ENCODE measurements at regions of chr6 and their contacts with region 1.

Region 1: DNA sequence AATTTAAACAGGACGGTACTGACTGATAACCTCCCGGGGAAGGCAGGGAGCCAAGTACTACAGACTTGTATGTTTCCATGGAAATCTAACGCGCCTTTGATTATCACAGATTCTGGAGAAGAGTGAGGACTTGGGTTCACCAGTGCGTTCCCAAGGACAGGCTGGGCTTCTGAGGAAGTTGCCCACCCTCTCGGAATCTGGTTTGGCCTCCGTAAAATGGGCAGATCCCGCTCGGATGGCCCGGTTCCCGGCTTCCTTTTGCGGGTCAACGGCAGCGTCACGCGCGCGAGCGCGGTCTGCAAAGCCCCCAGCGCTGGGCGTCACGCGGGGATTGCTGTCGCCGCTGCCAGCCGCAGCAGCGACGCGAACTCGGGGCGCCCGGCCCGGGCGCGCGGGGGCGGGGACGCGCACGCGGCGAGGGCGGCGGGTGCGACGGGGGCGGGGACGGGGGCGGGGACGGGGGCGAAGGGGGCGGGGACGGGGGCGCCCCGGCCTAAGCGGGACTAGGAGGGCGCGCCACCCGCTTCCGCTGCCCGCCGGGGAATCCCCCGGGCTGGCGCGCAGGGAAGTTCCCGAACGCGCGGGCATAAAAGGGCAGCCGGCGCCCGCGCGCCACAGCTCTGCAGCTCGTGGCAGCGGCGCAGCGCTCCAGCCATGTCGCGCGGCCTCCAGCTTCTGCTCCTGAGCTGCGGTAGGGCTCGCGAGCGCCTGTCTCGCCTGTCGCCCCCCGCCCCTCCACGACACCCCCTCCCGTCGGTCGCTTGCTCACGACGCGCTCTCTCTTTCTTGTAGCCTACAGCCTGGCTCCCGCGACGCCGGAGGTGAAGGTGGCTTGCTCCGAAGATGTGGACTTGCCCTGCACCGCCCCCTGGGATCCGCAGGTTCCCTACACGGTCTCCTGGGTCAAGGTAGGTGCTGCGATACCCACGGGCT is at the start of gene CD83:
- DNase-seq: peak; percentile 91
- ATAC-seq: peak; percentile 72
- H3K4me3 Mint-ChIP-seq: peak within 1 kb of the TSS; percentile 95
- H3K27ac Mint-ChIP-seq: peak within 1 kb of the TSS; percentile 94
- H3K4me1 Mint-ChIP-seq: peaks cover 47% of the 10 kb centered on the region
- H3K27me3 Mint-ChIP-seq: no peaks in the 10 kb centered on the region
- CTCF ChIP-seq: no peak
- total RNA-seq, gene CD83: 483 and 492 TPM in 2 replicates

Region 2: GRCh38 chr6:13814176-13814937 is 303.1 kb before region 1 on chr6 and contains the start of gene MCUR1:
- CTCF ChIA-PET with region 1: no interaction called
- POLR2A ChIA-PET with region 1: no interaction called
- intact Hi-C with region 1: loop called (anchors 1 kb)
- DNase-seq: peak; percentile 81
- ATAC-seq: peak; percentile 83
- H3K4me3 Mint-ChIP-seq: peak within 1 kb of the TSS; percentile 91
- H3K27ac Mint-ChIP-seq: peak within 1 kb of the TSS; percentile 87
- H3K4me1 Mint-ChIP-seq: peaks cover 32% of the 10 kb centered on the region
- H3K27me3 Mint-ChIP-seq: no peaks in the 10 kb centered on the region
- CTCF ChIP-seq: no peak
- total RNA-seq, gene MCUR1: 13.6 and 14.1 TPM in 2 replicates

Region 3: DNA sequence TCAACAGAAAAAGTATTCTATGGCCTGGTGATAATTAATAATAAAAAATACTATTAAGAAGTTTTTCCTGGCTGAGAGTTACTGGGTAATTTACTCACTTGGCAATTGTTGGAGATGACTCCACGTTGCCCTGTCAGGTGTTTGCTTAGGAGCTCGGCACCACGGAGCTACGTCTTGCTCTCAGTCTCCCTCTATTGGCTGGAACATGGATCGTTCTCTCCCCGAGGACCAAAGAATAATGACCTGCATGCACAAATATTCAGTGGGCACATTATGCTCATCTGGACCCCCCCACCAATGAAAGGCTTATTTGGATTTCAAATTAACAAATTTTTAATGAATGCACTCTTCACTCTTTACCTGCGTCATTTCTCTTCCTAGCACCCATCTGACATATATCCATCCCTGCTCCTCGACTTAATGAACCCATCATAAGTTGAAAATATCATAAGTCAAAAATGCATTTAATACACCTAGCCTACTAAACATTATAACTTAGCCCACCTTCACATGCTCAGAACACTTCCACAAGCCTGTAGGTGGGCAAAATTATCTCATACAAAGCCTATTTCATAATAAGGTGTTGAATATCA is 70.9 kb before region 1 on chr6:
- CTCF ChIA-PET with region 1: interaction called, 3 read pairs
- POLR2A ChIA-PET with region 1: interaction called, 12 read pairs
- intact Hi-C with region 1: loop called (anchors 1 kb)
- DNase-seq: no peak
- ATAC-seq: peak; percentile 89
- H3K4me3 Mint-ChIP-seq: no peak overlapping the region
- H3K27ac Mint-ChIP-seq: no peak overlapping the region
- H3K4me1 Mint-ChIP-seq: peaks cover 5% of the 10 kb centered on the region
- H3K27me3 Mint-ChIP-seq: peaks cover 3% of the 10 kb centered on the region
- CTCF ChIP-seq: peak; percentile 20

Region 4: GRCh38 chr6:14059791-14060444 is 57.5 kb before region 1 on chr6:
- CTCF ChIA-PET with region 1: no interaction called
- POLR2A ChIA-PET with region 1: no interaction called
- intact Hi-C with region 1: no loop called
- DNase-seq: no peak
- ATAC-seq: no peak
- H3K4me3 Mint-ChIP-seq: no peak overlapping the region
- H3K27ac Mint-ChIP-seq: no peak overlapping the region
- H3K4me1 Mint-ChIP-seq: no peaks in the 10 kb centered on the region
- H3K27me3 Mint-ChIP-seq: peaks cover 4% of the 10 kb centered on the region
- CTCF ChIP-seq: no peak

Region 5: DNA sequence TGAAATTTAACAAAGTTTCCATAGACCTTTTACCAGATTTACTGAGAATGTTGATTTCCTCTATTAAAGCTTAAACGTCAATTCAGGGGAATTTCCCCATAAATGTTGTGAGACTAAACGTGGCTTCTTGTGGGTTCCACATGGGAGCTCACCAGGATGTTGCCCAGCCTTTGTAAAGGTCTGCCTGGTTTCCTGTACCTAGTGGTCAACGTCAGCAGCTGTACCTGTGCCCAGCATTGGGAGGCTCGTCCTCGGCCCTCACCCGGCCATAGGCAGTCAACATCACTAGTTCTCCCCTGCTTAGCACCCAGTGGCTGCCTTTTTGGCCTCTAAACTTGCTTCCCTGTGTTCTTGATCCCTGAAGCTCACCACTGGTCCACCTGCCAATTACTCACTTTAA is 22.0 kb before region 1 on chr6:
- CTCF ChIA-PET with region 1: interaction called, 8 read pairs
- POLR2A ChIA-PET with region 1: interaction called, 911 read pairs
- intact Hi-C with region 1: loop called (anchors 1 kb)
- DNase-seq: peak; percentile 72
- ATAC-seq: peak; percentile 73
- H3K4me3 Mint-ChIP-seq: peak overlapping the region; percentile 85
- H3K27ac Mint-ChIP-seq: peak overlapping the region; percentile 100
- H3K4me1 Mint-ChIP-seq: peaks cover 96% of the 10 kb centered on the region
- H3K27me3 Mint-ChIP-seq: no peaks in the 10 kb centered on the region
- CTCF ChIP-seq: no peak

Region 6: GRCh38 chr6:14129575-14129974 is 12.2 kb after region 1 on chr6:
- CTCF ChIA-PET with region 1: interaction called, 6 read pairs
- POLR2A ChIA-PET with region 1: interaction called, 52 read pairs
- intact Hi-C with region 1: no loop called
- DNase-seq: no peak
- ATAC-seq: peak; percentile 19
- H3K4me3 Mint-ChIP-seq: peak overlapping the region; percentile 79
- H3K27ac Mint-ChIP-seq: peak overlapping the region; percentile 46
- H3K4me1 Mint-ChIP-seq: peaks cover 100% of the 10 kb centered on the region
- H3K27me3 Mint-ChIP-seq: no peaks in the 10 kb centered on the region
- CTCF ChIP-seq: no peak

Region 7: DNA sequence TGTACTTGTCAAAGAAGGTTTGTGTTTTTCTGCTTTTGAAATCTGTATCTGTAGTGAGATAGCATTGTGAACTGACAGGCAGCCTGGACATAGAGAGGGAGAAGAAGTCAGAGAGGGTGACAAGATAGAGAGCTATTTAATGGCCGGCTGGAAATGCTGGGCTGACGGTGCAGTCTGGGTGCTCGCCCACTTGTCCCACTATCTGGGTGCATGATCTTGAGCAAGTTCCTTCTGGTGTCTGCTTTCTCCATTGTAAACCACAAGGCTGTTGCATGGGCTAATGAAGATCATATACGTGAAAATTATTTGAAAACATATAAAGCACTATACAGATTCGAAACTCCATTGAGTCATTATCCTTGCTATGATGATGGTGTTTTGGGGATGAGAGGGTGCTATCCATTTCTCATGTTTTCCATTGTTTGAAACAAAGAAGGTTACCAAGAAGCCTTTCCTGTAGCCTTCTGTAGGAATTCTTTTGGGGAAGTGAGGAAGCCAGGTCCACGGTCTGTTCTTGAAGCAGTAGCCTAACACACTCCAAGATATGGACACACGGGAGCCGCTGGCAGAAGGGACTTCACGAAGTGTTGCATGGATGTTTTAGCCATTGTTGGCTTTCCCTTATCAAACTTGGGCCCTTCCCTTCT is 18.6 kb after region 1 on chr6:
- CTCF ChIA-PET with region 1: no interaction called
- POLR2A ChIA-PET with region 1: interaction called, 52 read pairs
- intact Hi-C with region 1: no loop called
- DNase-seq: no peak
- ATAC-seq: no peak
- H3K4me3 Mint-ChIP-seq: no peak overlapping the region
- H3K27ac Mint-ChIP-seq: peak overlapping the region; percentile 73
- H3K4me1 Mint-ChIP-seq: peaks cover 65% of the 10 kb centered on the region
- H3K27me3 Mint-ChIP-seq: no peaks in the 10 kb centered on the region
- CTCF ChIP-seq: no peak

Region 8: GRCh38 chr6:14144678-14145113 is 27.3 kb after region 1 on chr6:
- CTCF ChIA-PET with region 1: no interaction called
- POLR2A ChIA-PET with region 1: interaction called, 10 read pairs
- intact Hi-C with region 1: loop called (anchors 2 kb)
- DNase-seq: peak; percentile 63
- ATAC-seq: peak; percentile 84
- H3K4me3 Mint-ChIP-seq: peak overlapping the region; percentile 20
- H3K27ac Mint-ChIP-seq: peak overlapping the region; percentile 62
- H3K4me1 Mint-ChIP-seq: peaks cover 42% of the 10 kb centered on the region
- H3K27me3 Mint-ChIP-seq: no peaks in the 10 kb centered on the region
- CTCF ChIP-seq: peak; percentile 57